CD4-positive, alpha-beta T cell (primary cell): ENCODE measurements at regions of chr3 and their contacts with region 1.

Region 1: DNA sequence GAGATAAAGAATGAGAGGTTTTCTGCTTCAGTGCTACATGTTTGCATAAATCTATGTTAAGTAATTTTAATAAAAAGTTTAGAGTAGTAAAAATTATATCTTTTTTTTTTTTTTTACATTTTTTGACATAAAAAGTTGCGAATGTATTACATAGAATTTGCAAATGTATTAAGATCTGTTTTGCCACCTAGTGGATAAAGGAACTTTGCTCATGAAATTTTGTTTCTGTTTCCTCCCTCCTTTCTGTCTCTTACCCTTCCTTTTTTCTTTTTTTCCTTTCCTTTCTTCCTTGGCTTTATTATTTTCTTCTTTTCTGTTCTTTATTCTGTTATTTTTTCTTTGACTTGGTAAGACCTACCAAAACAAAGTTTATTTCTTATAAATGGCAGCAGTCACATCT is 58.5 kb upstream of the UTS2B start:
- DNase-seq: no peak
- ATAC-seq: no peak
- H3K4me3 ChIP-seq: no peak overlapping the region
- H3K4me3 Mint-ChIP-seq: no peak overlapping the region
- H3K27ac ChIP-seq: no peak overlapping the region
- H3K27ac Mint-ChIP-seq: no peak overlapping the region
- H3K4me1 ChIP-seq: no peaks in the 10 kb centered on the region
- H3K4me1 Mint-ChIP-seq: no peaks in the 10 kb centered on the region
- H3K27me3 ChIP-seq: no peaks in the 10 kb centered on the region
- H3K27me3 Mint-ChIP-seq: no peaks in the 10 kb centered on the region
- CTCF ChIP-seq: no peak

Region 2: DNA sequence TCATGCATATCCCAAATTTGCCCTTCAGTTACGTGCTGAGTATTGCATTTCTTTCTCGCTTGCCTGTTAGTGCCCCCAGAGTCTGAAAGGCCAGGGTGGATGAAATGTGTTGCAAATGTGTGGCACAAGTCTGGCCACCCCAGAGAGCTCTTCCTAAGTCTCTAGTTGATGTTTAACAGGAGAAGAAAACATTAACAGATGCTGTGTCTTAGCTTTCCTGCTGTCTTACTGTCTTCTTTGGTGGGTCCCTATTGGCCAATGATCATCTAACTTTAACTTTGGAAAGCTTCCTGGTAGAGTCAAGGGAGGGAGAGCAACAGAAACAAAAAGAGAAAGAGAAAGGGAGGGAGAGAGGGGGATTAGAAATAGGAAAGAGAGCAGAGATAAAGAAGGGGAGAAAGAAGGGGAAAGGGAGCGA is 1191.5 kb before region 1 on chr3:
- CTCF ChIA-PET with region 1: no interaction called
- POLR2A ChIA-PET with region 1: no interaction called
- intact Hi-C with region 1: no loop called
- DNase-seq: no peak
- ATAC-seq: no peak
- H3K4me3 ChIP-seq: no peak overlapping the region
- H3K4me3 Mint-ChIP-seq: no peak overlapping the region
- H3K27ac ChIP-seq: no peak overlapping the region
- H3K27ac Mint-ChIP-seq: no peak overlapping the region
- H3K4me1 ChIP-seq: no peaks in the 10 kb centered on the region
- H3K4me1 Mint-ChIP-seq: no peaks in the 10 kb centered on the region
- H3K27me3 ChIP-seq: no peaks in the 10 kb centered on the region
- H3K27me3 Mint-ChIP-seq: peaks cover 28% of the 10 kb centered on the region
- CTCF ChIP-seq: no peak

Region 3: GRCh38 chr3:191244242-191244867 is 144.5 kb before region 1 on chr3:
- CTCF ChIA-PET with region 1: no interaction called
- POLR2A ChIA-PET with region 1: no interaction called
- intact Hi-C with region 1: loop called in 1 of 2 experiments (anchors 10 kb)
- DNase-seq: peak in 2 of 14 experiments; percentile 7 to 15
- ATAC-seq: no peak
- H3K4me3 ChIP-seq: no peak overlapping the region
- H3K4me3 Mint-ChIP-seq: no peak overlapping the region
- H3K27ac ChIP-seq: no peak overlapping the region
- H3K27ac Mint-ChIP-seq: no peak overlapping the region
- H3K4me1 ChIP-seq: no peaks in the 10 kb centered on the region
- H3K4me1 Mint-ChIP-seq: peaks cover 11% of the 10 kb centered on the region
- H3K27me3 ChIP-seq: no peaks in the 10 kb centered on the region
- H3K27me3 Mint-ChIP-seq: no peaks in the 10 kb centered on the region
- CTCF ChIP-seq: peak; percentile 26

Region 4: DNA sequence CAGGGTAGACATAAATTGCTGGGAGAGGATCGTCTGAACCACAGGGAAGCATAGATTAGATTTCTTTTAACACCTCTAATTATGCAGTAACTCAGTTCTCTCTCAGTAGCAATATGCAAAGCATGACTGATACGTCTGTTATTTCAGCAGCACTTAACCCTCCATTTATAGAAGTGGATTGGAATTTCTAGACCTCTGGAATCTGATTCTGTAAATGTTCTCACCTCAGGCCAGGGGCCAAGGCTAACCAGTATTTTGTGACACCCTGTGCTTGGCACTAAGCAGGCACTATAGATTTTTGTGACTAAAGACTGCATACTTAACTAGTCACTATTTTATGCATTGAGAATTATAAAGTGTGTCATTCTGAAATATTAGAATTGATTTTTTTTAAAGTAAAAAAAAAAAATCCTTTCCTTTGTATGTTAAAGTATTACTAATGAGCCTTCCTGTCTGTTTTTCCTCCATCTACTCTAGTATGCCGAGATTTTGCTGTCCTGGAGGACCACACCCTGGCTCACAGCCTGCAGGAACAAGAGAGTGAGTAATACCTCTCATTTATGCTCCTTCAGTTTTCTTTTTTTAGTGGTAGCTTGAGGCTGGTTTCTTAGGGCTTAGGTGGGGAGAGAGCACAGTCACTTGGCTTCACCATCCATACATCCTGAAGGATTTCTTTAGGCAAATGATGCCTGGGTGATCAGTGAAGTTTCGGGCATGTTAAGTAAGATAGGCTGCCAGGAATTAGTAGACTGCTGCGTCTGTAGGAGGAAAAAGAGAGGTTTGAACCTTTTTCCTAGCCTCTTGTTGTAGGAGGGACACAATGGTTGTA is 32.0 kb before region 1 on chr3:
- CTCF ChIA-PET with region 1: no interaction called
- POLR2A ChIA-PET with region 1: no interaction called
- intact Hi-C with region 1: loop called in 1 of 2 experiments (anchors 1 kb)
- DNase-seq: no peak
- ATAC-seq: no peak
- H3K4me3 ChIP-seq: no peak overlapping the region
- H3K4me3 Mint-ChIP-seq: no peak overlapping the region
- H3K27ac ChIP-seq: no peak overlapping the region
- H3K27ac Mint-ChIP-seq: no peak overlapping the region
- H3K4me1 ChIP-seq: no peaks in the 10 kb centered on the region
- H3K4me1 Mint-ChIP-seq: peaks cover 22% of the 10 kb centered on the region
- H3K27me3 ChIP-seq: no peaks in the 10 kb centered on the region
- H3K27me3 Mint-ChIP-seq: no peaks in the 10 kb centered on the region
- CTCF ChIP-seq: no peak

Region 5: DNA sequence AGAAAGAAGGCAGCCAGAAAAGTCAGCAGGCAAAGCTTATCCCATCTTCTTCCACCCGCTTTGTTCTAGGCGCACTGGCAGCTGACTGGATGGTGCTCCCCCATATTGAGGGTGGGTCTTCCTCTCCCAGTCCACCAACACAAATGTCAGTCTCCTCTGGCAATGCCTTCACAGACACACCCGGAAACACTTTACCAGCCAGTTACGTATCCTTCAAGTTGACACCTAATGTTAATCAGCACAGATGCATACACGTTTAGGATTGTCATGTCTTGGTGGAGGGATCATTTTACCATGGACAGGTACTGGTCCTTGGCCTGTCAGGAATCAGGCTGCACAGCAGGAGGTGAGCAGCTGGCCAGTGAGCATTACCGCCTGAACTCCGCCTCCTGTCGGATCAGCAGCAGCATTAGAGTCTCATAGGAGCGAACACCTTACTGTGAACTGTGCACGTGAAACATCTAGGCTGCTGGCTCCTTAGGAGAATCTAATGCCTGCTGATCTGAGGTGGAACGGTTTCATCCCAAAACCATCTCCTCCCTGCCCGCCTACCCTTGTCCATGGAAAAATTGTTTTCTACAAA is 13.0 kb after region 1 on chr3:
- CTCF ChIA-PET with region 1: no interaction called
- POLR2A ChIA-PET with region 1: no interaction called
- intact Hi-C with region 1: no loop called
- DNase-seq: no peak
- ATAC-seq: no peak
- H3K4me3 ChIP-seq: no peak overlapping the region
- H3K4me3 Mint-ChIP-seq: no peak overlapping the region
- H3K27ac ChIP-seq: no peak overlapping the region
- H3K27ac Mint-ChIP-seq: no peak overlapping the region
- H3K4me1 ChIP-seq: no peaks in the 10 kb centered on the region
- H3K4me1 Mint-ChIP-seq: no peaks in the 10 kb centered on the region
- H3K27me3 ChIP-seq: no peaks in the 10 kb centered on the region
- H3K27me3 Mint-ChIP-seq: no peaks in the 10 kb centered on the region
- CTCF ChIP-seq: no peak

Region 6: GRCh38 chr3:191425322-191425734 is 36.5 kb after region 1 on chr3:
- CTCF ChIA-PET with region 1: no interaction called
- POLR2A ChIA-PET with region 1: no interaction called
- intact Hi-C with region 1: no loop called
- DNase-seq: no peak
- ATAC-seq: no peak
- H3K4me3 ChIP-seq: no peak overlapping the region
- H3K4me3 Mint-ChIP-seq: no peak overlapping the region
- H3K27ac ChIP-seq: no peak overlapping the region
- H3K27ac Mint-ChIP-seq: no peak overlapping the region
- H3K4me1 ChIP-seq: no peaks in the 10 kb centered on the region
- H3K4me1 Mint-ChIP-seq: no peaks in the 10 kb centered on the region
- H3K27me3 ChIP-seq: no peaks in the 10 kb centered on the region
- H3K27me3 Mint-ChIP-seq: peaks cover 16% of the 10 kb centered on the region
- CTCF ChIP-seq: no peak